Heart left ventricle (tissue), 16 donors: ENCODE measurements at regions of chr2 and their contacts with region 1.

Region 1: GRCh38 chr2:144937910-144938709 is 418.2 kb upstream of the ZEB2 start:
- DNase-seq: peak in 2 of 5 donors; percentile 29 to 49
- ATAC-seq: peak; percentile 73 to 87 (median 82)
- H3K4me3 ChIP-seq: peak overlapping the region in 1 of 12 donors; percentile 3
- H3K27ac ChIP-seq: peak overlapping the region; percentile 46 to 83 (median 69)
- H3K4me1 ChIP-seq: peaks cover 0 to 51% (median 8%) of the 10 kb centered on the region in 12 donors
- H3K27me3 ChIP-seq: no peaks in the 10 kb centered on the region
- CTCF ChIP-seq: no peak
- POLR2A ChIP-seq: no peak

Region 2: DNA sequence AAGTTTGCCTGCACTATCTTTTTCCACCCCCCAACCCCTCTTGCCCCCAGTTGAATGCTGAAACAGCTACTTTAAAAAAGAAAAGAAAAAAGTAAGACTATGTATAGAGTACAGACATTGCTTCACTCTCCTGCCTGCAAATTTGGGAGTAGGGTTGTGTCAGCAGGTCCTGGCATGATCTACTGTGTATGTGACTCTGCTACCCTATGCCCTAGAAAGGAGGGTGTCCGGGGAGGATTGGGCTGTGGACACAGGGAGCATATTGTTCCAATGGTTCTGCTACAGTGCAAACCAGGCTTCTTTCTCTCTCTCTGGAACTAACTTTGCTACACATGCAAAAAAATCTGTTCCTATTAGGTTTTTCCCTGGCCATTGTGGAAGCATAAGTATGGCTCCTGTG is 408.3 kb before region 1 on chr2:
- intact Hi-C with region 1: loop called in 2 of 10 experiments (anchors 5 kb)
- DNase-seq: no peak
- ATAC-seq: peak; percentile 64 to 82 (median 72)
- H3K4me3 ChIP-seq: no peak overlapping the region
- H3K27ac ChIP-seq: no peak overlapping the region
- H3K4me1 ChIP-seq: peaks cover 0 to 17% (median 0%) of the 10 kb centered on the region in 12 donors
- H3K27me3 ChIP-seq: no peaks in the 10 kb centered on the region
- CTCF ChIP-seq: no peak
- POLR2A ChIP-seq: no peak

Region 3: DNA sequence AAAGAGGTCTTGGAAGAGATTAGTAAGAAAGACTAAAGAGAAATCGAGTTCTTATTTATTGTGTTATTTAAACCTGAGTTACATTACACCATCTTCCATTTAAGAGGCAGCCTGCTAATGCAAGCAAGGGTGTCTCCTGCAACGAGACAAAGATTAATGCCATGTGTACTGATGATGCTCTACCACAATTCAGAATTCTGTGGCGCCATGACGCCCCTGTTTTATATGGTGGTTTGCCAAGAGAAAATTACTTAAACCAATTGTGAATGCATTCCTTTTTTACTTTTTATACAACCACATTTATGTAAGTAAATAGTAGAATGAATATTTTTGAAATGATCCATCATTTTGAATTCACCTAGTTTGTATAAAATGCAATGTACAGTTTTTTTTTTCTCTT is 62.1 kb before region 1 on chr2:
- intact Hi-C with region 1: loop called in 2 of 10 experiments (anchors 2 to 5 kb)
- DNase-seq: no peak
- ATAC-seq: no peak
- H3K4me3 ChIP-seq: no peak overlapping the region
- H3K27ac ChIP-seq: peak overlapping the region in 5 of 12 donors; percentile 13 to 59 (median 53)
- H3K4me1 ChIP-seq: peaks cover 0 to 14% (median 0%) of the 10 kb centered on the region in 12 donors
- H3K27me3 ChIP-seq: no peaks in the 10 kb centered on the region
- CTCF ChIP-seq: no peak
- POLR2A ChIP-seq: no peak

Region 4: DNA sequence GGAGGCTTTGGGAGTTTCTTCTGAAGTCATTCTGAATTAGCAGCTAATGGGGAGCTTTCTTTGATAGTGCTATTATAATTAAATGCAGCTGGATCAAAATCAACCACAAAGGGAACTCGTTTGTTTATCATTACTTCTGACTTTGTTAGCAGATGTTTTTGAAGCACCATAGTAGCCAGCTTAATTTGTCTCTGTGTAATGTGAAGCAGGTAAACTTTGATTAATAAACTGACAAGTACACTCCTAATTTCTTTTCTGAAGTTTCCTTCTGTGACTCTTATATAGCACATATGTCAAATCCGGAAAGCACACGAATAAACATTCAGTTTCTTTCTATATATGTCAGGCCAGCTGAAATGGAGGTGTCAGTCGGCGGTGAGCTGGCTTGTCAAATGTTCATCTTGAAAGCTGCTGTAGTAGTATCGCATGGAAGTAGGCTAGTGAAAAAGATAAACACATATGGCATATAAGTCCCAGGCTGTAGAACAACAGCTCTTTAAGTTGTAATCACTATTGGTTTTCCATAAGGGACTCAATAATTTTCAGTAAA is 33.8 kb after region 1 on chr2:
- intact Hi-C with region 1: no loop called
- DNase-seq: no peak
- ATAC-seq: no peak
- H3K4me3 ChIP-seq: no peak overlapping the region
- H3K27ac ChIP-seq: no peak overlapping the region
- H3K4me1 ChIP-seq: no peaks in the 10 kb centered on the region
- H3K27me3 ChIP-seq: no peaks in the 10 kb centered on the region
- CTCF ChIP-seq: no peak
- POLR2A ChIP-seq: no peak

Region 5: DNA sequence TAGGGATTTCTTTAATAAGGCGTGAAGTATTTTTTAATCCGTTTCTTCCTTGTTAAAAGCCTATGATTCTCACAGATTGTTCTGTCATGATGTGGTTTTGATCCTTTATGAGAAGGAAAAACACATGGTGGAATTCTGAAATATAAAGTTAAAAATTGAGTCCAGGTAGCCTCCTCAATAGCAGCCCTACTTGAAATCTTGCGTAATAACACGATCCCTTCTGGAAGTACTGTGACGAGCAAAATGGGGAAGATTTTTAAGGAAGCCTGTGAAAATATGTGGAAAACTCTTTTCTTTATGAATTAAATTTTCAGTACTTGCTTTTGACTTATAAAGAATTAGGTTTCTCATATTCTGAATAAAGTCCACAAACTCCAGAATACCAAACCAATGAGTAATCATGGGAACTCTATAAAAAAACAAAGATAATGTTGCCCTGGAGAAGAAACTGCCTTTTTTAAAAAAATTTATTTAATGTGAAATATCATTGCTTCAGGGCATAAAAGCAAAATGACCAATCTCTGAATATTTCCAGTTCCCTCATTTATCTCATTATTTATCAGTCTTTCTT is 58.2 kb after region 1 on chr2:
- intact Hi-C with region 1: loop called in 2 of 10 experiments (anchors 2 to 5 kb)
- DNase-seq: no peak
- ATAC-seq: no peak
- H3K4me3 ChIP-seq: peak overlapping the region in 2 of 12 donors; percentile 26 to 31
- H3K27ac ChIP-seq: peak overlapping the region; percentile 1 to 70 (median 56)
- H3K4me1 ChIP-seq: peaks cover 0 to 27% (median 2%) of the 10 kb centered on the region in 12 donors
- H3K27me3 ChIP-seq: no peaks in the 10 kb centered on the region
- CTCF ChIP-seq: no peak
- POLR2A ChIP-seq: no peak